Mammary epithelial cell (primary cell): ENCODE measurements at regions of chr7 and their contacts with region 1.

Region 1: DNA sequence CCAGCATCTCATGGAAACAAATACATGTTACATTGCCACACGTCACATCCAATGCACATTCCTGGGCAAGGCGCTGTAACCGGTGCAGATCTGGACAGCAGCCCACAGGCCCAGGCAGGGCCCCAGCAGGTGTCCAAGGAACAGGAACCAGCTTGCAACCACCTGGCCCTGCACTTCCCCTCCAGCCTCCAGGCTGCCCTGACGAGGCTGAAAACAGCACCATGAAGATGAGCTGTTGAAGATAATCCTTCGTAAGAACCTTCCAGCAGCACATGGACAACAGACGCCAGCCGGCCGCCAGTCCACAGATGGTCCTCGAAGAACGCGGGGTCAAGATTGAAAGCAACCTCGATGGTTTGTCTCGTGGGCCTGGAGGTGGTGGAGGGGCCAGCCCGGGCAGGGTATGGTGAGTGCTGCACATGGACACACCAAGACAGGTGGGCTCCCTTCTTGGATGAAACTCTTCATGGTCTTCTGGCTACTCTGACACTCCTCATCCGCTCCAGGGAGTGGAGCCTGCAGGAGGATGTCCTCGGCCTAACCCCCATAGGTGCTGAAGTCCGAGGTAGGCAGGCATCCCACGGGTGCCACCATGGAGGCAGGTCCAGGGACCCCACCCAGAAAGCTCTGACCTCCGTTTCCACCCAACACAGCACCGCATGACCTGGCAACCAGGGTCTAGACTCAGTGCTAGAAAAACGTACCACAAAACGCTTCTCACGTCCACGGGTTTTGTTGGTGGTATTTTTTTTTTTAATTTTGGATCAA is 22.9 kb downstream of the PDGFA start:
- DNase-seq: peak; percentile 90
- H3K4me3 ChIP-seq: no peak overlapping the region
- H3K27ac ChIP-seq: peak overlapping the region; percentile 56
- H3K4me1 ChIP-seq: peaks cover 30% of the 10 kb centered on the region
- H3K27me3 ChIP-seq: no peaks in the 10 kb centered on the region
- CTCF ChIP-seq: peak in 1 of 2 donors; percentile 18

Region 2: DNA sequence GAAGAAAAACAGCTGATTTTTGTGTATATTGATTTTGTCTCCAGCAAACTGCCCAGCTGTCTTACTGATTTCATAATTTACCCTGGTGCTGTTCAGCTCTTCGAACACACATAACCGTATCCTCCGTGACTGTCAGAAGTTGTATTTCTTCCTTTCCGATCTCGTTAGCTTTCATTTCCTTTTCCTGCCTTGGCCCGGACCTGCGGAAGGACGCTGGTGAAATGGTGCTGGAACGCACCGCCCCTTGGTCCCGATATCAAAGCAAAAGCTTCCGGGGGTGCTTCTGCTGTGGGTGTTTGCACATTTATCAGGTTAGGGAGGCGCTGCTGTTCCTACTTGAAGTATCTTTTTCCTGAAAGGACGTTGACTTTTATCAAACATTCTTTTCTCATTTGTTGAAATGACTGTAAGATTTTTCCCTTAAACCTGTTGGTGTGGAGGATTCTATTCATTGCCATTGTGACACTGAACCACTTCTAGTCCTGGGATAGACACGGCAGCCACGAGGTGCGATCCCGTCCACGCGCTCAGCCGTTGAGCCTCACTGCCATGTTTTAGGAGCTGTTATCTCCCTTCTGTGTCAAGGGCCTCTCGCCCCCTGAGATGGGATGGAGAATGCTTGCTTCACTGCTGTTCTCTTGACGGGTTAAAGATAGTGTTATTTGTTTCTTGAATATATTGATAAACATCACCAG is 134.2 kb before region 1 on chr7:
- CTCF ChIA-PET with region 1: no interaction called
- dilution Hi-C with region 1: loop called (anchors 10 kb)
- in situ Hi-C with region 1: no loop called
- intact Hi-C with region 1: loop called (anchors 5 kb)
- DNase-seq: no peak
- H3K4me3 ChIP-seq: no peak overlapping the region
- H3K27ac ChIP-seq: no peak overlapping the region
- H3K4me1 ChIP-seq: peaks cover 20% of the 10 kb centered on the region
- H3K27me3 ChIP-seq: no peaks in the 10 kb centered on the region
- CTCF ChIP-seq: no peak

Region 3: DNA sequence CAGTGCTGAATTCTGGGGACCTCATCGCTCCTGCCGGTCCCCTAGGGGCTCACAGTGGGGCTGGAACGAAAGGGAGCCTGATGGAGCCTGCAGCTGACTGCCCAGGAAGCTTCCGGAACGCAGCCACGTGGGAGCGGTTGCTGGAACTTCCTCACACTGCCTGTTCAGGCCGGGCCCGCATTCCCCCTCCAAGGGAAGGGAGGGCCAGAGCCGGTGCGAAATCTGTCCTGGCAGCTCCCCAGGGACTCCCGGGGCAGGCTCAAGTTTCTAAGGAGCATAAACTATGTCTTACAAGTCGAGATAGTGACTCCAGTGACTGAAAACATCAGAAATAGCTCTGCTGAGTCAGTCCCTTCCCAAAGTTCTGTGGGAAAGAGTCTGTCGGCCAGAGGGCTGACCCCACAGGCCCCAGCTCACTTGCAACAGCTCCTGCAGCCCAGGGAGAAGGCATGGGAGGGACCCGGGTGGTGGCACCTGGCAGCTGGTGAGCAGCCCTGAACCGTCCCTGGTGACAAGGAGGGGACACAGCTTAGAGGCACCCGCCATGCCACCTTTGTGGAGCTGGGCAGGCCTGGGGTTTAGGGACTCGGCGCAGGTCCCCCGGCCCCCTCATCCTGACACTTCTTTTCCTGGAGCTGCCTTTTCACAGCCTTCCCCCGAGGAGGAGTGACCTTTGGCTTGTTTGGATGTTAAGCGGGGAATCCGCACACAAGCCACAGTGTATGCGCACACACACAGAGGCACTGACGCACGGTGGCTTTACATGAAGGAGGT is 24.7 kb before region 1 on chr7:
- CTCF ChIA-PET with region 1: no interaction called
- dilution Hi-C with region 1: no loop called
- in situ Hi-C with region 1: no loop called
- intact Hi-C with region 1: loop called (anchors 1 kb)
- DNase-seq: peak; percentile 81
- H3K4me3 ChIP-seq: peak overlapping the region in 1 of 3 experiments; percentile 10
- H3K27ac ChIP-seq: no peak overlapping the region
- H3K4me1 ChIP-seq: peaks cover 15% of the 10 kb centered on the region
- H3K27me3 ChIP-seq: no peaks in the 10 kb centered on the region
- CTCF ChIP-seq: no peak

Region 4: DNA sequence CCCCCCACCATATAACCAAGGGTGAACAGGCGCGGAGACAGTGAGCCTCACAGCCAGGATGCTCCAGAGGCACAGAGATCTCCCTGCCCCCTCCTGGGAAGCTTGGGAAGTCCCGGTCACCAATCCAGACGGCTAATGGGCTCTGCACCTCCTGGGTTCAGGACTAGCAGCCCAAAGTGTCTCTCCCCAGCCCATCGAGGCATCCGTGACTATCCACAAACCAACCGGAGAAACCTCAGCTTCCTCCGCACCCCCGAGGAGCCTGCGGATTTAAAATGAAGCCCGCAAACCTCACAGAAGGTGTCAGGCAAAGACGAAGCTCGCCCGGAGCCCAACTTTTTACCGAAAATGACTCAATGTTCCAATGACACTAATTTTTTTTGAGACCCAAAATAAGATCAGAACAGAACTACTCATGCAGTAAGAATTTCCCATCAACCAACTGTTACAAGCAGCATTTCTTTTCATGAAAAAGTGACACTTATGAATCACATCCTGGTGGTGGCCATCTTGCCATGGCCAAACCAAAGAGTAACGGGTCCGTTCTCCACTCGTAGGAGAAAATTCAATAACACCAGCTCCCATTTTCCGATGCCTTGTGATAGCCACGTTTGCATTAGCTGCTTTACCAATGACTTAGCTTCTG is 16.9 kb after region 1 on chr7:
- CTCF ChIA-PET with region 1: interaction called, 4 read pairs
- dilution Hi-C with region 1: no loop called
- in situ Hi-C with region 1: no loop called
- intact Hi-C with region 1: loop called (anchors 1 kb)
- DNase-seq: peak; percentile 55
- H3K4me3 ChIP-seq: peak overlapping the region in 1 of 3 experiments; percentile 7
- H3K27ac ChIP-seq: peak overlapping the region; percentile 44
- H3K4me1 ChIP-seq: peaks cover 50% of the 10 kb centered on the region
- H3K27me3 ChIP-seq: no peaks in the 10 kb centered on the region
- CTCF ChIP-seq: peak in 1 of 2 donors; percentile 36

Region 5: GRCh38 chr7:631964-632830 is 135.5 kb after region 1 on chr7:
- CTCF ChIA-PET with region 1: no interaction called
- dilution Hi-C with region 1: no loop called
- in situ Hi-C with region 1: no loop called
- intact Hi-C with region 1: no loop called
- DNase-seq: no peak
- H3K4me3 ChIP-seq: no peak overlapping the region
- H3K27ac ChIP-seq: no peak overlapping the region
- H3K4me1 ChIP-seq: no peaks in the 10 kb centered on the region
- H3K27me3 ChIP-seq: no peaks in the 10 kb centered on the region
- CTCF ChIP-seq: no peak